ENCODE measurements at regions of chr4 and their contacts with region 1.

Region 1: GRCh38 chr4:56544573-56545131 is 39.1 kb downstream of the ARL9 start:
- DNase-seq: peak; percentile 96
- H3K4me3 Mint-ChIP-seq: peak overlapping the region; percentile 77
- H3K27ac Mint-ChIP-seq: no peak overlapping the region
- H3K4me1 Mint-ChIP-seq: peaks cover 8% of the 10 kb centered on the region
- H3K27me3 Mint-ChIP-seq: peaks cover 18% of the 10 kb centered on the region

Region 2: GRCh38 chr4:54632537-54632936 is 1912.1 kb before region 1 on chr4:
- intact Hi-C with region 1: no loop called
- DNase-seq: no peak
- H3K4me3 Mint-ChIP-seq: no peak overlapping the region
- H3K27ac Mint-ChIP-seq: no peak overlapping the region
- H3K4me1 Mint-ChIP-seq: no peaks in the 10 kb centered on the region
- H3K27me3 Mint-ChIP-seq: no peaks in the 10 kb centered on the region

Region 3: GRCh38 chr4:56505269-56506130 is 39.2 kb before region 1 on chr4 and contains the start of gene ARL9:
- intact Hi-C with region 1: loop called (anchors 2 kb)
- DNase-seq: peak; percentile 87
- H3K4me3 Mint-ChIP-seq: peak within 1 kb of the TSS; percentile 87
- H3K27ac Mint-ChIP-seq: peak within 1 kb of the TSS; percentile 60
- H3K4me1 Mint-ChIP-seq: peaks cover 15% of the 10 kb centered on the region
- H3K27me3 Mint-ChIP-seq: peaks cover 13% of the 10 kb centered on the region
- total RNA-seq, gene ARL9: 0.07 TPM in 1 of 2 replicates, not detected in the other

Region 4: DNA sequence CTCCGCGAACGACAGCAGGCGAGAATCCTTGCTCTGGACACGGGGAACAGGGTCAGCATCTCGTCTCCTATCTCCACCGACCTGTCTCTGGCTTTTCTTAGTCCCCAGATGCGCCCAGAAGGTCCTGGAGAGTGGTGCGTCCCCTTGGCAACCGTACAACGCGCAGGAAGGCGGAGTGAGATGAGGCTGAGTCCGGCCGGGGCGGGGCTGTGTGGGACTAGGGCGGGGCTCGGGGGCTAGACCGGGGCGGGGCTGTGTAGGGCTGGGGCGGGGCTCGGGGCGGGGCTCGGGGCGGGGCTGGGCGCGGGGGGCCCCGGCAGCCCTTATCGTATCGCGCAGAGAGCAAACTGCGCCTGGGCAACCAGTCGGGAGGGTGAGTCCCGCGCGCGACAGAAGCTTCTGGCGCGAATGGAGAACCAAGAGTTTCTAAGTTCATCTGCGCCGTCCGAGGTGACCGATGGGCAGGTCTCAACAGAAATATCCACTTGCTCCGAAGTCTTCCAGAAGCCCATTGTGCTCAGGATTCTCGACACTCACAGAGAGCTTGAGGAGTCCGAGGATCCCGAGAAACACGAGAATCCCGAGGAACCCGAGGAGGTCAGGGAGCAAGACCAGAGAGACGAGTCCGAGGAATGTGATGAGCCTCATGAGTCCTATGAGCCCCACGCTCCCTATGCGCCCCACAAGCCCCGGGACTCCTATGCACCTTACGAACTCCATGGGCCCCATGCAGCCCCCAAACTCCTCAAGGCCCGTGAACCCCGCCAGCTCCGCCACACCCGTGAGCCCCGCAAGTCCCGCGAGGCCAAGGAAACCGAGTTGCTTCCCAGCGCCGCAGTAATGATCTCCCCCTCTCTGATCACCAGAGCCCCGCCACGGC is 14.1 kb before region 1 on chr4:
- intact Hi-C with region 1: loop called (anchors 2 kb)
- DNase-seq: peak; percentile 92
- H3K4me3 Mint-ChIP-seq: no peak overlapping the region
- H3K27ac Mint-ChIP-seq: no peak overlapping the region
- H3K4me1 Mint-ChIP-seq: no peaks in the 10 kb centered on the region
- H3K27me3 Mint-ChIP-seq: peaks cover 28% of the 10 kb centered on the region

Region 5: GRCh38 chr4:56828784-56829535 is 284.3 kb after region 1 on chr4:
- intact Hi-C with region 1: loop called (anchors 10 kb)
- DNase-seq: no peak
- H3K4me3 Mint-ChIP-seq: no peak overlapping the region
- H3K27ac Mint-ChIP-seq: peak overlapping the region; percentile 43
- H3K4me1 Mint-ChIP-seq: peaks cover 18% of the 10 kb centered on the region
- H3K27me3 Mint-ChIP-seq: peaks cover 11% of the 10 kb centered on the region

Region 6: DNA sequence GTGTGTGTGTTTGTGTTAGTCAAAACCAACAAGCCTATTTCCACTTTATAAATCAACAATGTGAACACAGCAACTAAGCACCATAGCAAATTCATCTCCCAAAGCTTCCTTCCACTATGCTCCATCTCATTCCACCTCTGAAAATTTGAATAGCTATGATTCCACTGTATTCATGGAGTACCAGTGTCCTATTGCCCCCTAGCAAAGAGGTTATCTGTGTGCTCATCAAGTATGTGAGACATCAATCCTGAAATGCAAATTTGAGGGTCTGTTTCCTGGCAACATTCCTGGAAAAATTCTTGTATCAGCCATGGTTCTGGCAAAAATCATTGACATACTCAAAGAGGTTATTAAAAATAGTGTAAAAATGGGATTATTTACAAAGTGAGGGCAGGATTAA is 1291.1 kb after region 1 on chr4:
- intact Hi-C with region 1: no loop called
- DNase-seq: no peak
- H3K4me3 Mint-ChIP-seq: no peak overlapping the region
- H3K27ac Mint-ChIP-seq: no peak overlapping the region
- H3K4me1 Mint-ChIP-seq: no peaks in the 10 kb centered on the region
- H3K27me3 Mint-ChIP-seq: no peaks in the 10 kb centered on the region